Activated T-helper 2 cell treated with anti-CD3 and anti-CD28 coated beads, Interferon-gamma antibody, Interleukin-2, Interleukin-4, amounts not matched to agents 10 μg/mL and 5 μg/mL and 100 μg/mL, durations not matched to agents 14 hours and 24 hours and 36 hours (primary cell): ENCODE measurements at regions of chr6 and their contacts with region 1.

Region 1: DNA sequence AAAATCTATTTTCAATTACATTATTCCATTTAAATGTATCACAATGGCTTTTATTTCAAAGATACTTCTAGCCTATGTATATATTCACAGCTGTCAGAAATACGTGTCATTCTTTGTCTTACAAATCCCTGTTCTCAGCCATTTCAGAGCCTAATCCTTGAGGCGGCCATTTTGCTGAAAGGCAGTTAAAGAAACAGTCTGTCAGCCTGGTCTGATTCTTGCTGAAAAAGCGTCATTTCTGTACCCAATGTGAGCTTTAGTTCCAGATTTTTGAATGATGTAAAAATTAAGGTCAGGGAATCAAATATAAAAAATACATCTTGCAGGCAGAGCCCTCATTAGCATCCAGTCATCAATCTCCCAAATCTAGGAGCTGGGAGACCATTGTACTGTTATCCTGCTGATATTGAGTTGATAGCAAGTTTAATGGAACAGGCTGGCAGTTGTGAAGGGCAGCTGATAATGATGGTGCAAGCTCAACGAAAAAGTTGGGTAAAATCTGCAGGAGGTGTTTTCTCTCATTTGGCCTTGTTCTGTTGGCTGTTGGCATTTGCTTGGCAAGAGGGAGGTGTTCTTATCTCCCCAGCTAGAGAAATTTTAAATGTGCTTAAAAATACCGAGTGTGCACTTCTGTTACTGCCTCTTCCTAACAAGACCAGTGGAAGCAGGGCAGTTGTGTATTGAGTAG is 314.8 kb downstream of the SOX4 start:
- DNase-seq: no peak
- H3K4me3 Mint-ChIP-seq: no peak overlapping the region
- H3K27ac Mint-ChIP-seq: no peak overlapping the region
- H3K4me1 Mint-ChIP-seq: peaks cover under 1% of the 10 kb centered on the region
- H3K27me3 Mint-ChIP-seq: peaks cover 4% of the 10 kb centered on the region

Region 2: GRCh38 chr6:21946298-21946783 is 38.0 kb after region 1 on chr6:
- intact Hi-C with region 1: loop called (anchors 5 kb)
- DNase-seq: no peak
- H3K4me3 Mint-ChIP-seq: no peak overlapping the region
- H3K27ac Mint-ChIP-seq: no peak overlapping the region
- H3K4me1 Mint-ChIP-seq: peaks cover 28% of the 10 kb centered on the region
- H3K27me3 Mint-ChIP-seq: no peaks in the 10 kb centered on the region